ENCODE measurements at regions of chr2 and their contacts with region 1.

Region 1: GRCh38 chr2:191927319-191927867 is 80.5 kb upstream of the CAVIN2 start:
- DNase-seq: no peak

Region 2: GRCh38 chr2:191851158-191851557 is 76.2 kb before region 1 on chr2:
- intact Hi-C with region 1: loop called in 1 of 2 experiments (anchors 2 kb)
- DNase-seq: no peak

Region 3: DNA sequence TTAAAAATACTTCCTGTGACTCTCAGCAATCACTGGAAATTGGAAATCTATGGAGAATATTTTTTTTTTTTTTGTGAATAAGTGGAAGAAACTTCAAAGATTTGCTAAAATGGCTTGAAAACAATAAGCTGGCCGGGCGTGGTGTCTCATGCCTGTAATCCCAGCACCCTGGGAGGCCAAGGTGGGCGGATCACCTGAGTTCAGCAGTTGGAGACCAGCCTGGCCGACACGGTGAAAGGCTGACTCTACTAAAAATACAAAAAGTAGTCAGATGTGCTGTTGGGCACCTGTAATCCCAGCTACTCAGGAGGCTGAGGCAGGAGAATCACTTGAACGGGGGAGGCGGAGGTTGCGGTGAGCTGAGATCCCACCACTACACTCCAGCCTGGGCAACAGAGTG is 75.0 kb after region 1 on chr2:
- intact Hi-C with region 1: loop called in 1 of 2 experiments (anchors 2 kb)
- DNase-seq: no peak